Heart right ventricle (tissue), 16 donors: ENCODE measurements at regions of chr7 and their contacts with region 1.

Region 1: GRCh38 chr7:35716038-35716803 is 21.3 kb upstream of the HERPUD2 start:
- DNase-seq: peak in 1 of 2 donors; percentile 32
- ATAC-seq: peak in 7 of 8 donors; percentile 59 to 76 (median 71)
- H3K4me3 ChIP-seq: peak overlapping the region in 9 of 10 donors; percentile 6 to 46 (median 41)
- H3K27ac ChIP-seq: peak overlapping the region; percentile 44 to 84 (median 71)
- H3K4me1 ChIP-seq: peaks cover 0 to 45% (median 13%) of the 10 kb centered on the region in 9 donors
- H3K27me3 ChIP-seq: no peaks in the 10 kb centered on the region
- CTCF ChIP-seq: no peak

Region 2: GRCh38 chr7:35758421-35758820 is 42.2 kb after region 1 on chr7:
- intact Hi-C with region 1: loop called in 1 of 10 experiments (anchors 5 kb)
- DNase-seq: no peak
- ATAC-seq: no peak
- H3K4me3 ChIP-seq: no peak overlapping the region
- H3K27ac ChIP-seq: peak overlapping the region in 1 of 10 donors; percentile 16
- H3K4me1 ChIP-seq: peaks cover 3 to 71% (median 46%) of the 10 kb centered on the region in 9 donors
- H3K27me3 ChIP-seq: no peaks in the 10 kb centered on the region
- CTCF ChIP-seq: peak in 1 of 9 donors; percentile 9

Region 3: DNA sequence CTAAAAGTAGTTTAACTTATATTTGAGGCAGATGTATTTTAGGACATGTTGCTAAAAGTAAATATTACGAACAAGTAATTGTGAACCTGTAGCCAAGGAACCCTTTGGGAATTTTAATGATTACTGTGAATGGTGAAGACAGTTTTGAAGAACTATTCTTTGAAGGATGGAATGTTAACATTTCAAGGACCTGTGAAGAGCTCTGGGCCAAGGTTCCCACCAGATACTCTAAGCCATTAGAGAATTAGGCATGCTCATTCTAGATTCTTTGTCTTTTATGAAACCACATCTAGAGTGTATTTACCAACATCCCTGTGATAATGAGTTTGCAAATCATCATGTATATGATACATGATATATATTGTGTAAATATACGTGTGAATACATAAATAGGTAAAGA is 184.4 kb after region 1 on chr7:
- intact Hi-C with region 1: loop called in 2 of 10 experiments (anchors 5 kb)
- DNase-seq: no peak
- ATAC-seq: no peak
- H3K4me3 ChIP-seq: no peak overlapping the region
- H3K27ac ChIP-seq: no peak overlapping the region
- H3K4me1 ChIP-seq: no peaks in the 10 kb centered on the region
- H3K27me3 ChIP-seq: no peaks in the 10 kb centered on the region
- CTCF ChIP-seq: no peak

Region 4: DNA sequence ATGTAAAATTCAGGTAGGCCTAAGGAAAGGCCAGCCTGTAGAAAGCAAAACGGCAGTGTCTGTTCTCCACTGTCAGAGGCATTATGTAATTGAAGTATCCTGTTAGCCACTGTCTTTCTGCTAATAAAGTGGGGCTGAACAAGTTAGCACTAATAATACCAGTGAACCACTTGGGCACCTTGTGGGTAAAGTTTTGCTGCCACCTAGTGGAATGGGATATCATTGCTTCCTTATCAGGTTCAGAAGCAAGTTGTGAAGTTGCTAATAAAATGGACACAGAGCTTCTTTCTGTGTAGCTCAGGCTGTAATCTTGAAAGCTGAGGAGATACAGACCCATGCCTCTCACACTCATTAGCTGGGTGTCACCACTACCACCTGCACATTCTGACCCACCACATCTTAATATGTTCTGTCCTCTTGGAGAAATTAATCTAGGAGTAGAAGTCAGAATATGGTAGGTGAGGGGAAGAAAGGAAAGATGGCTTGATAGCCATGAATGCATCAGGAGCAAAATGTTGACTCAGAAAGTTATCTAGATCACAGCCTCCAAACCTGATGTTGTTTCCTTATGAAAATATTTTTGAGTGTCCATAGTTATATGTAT is 259.7 kb after region 1 on chr7:
- intact Hi-C with region 1: loop called in 1 of 10 experiments (anchors 10 kb)
- DNase-seq: peak in 1 of 2 donors; percentile 62
- ATAC-seq: peak in 7 of 8 donors; percentile 47 to 81 (median 75)
- H3K4me3 ChIP-seq: no peak overlapping the region
- H3K27ac ChIP-seq: no peak overlapping the region
- H3K4me1 ChIP-seq: no peaks in the 10 kb centered on the region
- H3K27me3 ChIP-seq: peaks cover 0 to 24% (median 3%) of the 10 kb centered on the region in 7 donors
- CTCF ChIP-seq: peak; percentile 68 to 90 (median 82)